Caco-2 (cell line): ENCODE measurements at regions of chr11 and their contacts with region 1.

Region 1: GRCh38 chr11:44621140-44621681 is 55.7 kb downstream of the CD82 start:
- DNase-seq: peak; percentile 78 to 89
- H3K4me3 ChIP-seq: no peak overlapping the region
- H3K4me3 Mint-ChIP-seq: peak overlapping the region; percentile 23
- H3K27ac Mint-ChIP-seq: no peak overlapping the region
- H3K4me1 ChIP-seq: no peaks in the 10 kb centered on the region
- H3K4me1 Mint-ChIP-seq: no peaks in the 10 kb centered on the region
- H3K27me3 ChIP-seq: no peaks in the 10 kb centered on the region; the same call in 1 of the 2 replicates
- H3K27me3 Mint-ChIP-seq: no peaks in the 10 kb centered on the region
- CTCF ChIP-seq: peak; percentile 95 to 97

Region 2: DNA sequence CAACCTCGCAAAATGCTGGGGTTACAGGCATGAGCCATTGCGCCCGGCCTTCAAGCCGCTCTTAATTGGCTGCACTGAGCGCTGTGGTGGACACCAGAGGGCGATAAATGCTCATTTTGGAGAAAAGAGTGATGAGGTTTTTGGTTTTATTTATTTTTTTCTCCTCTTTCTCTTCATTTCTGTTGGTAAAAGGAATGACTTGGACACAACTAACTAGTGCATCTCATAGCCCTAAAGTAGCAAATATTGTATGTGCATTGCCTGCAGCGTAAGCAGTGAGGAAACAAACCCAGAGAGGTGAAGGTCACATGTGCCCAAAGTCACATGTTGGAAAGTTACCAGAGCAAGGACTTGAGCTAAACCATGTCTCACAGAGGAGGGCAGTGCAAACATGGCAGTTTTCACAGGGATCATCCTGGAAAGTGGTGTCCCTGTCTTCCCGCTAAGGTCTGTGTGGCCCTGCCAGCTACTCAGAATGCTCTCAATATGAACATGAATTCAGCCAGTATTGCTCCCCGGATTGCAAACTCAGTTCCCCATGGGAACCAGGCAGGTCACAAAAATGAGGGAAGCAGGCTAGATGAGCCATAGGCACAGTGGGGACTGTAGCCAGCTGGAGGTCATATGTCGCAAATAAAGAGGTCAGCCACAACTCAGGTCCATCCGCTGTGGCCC is 64.3 kb before region 1 on chr11:
- CTCF ChIA-PET with region 1: interaction called, 49 read pairs
- POLR2A ChIA-PET with region 1: no interaction called
- intact Hi-C with region 1: loop called (anchors 1 kb)
- DNase-seq: peak in 1 of 2 experiments; percentile 62
- H3K4me3 ChIP-seq: no peak overlapping the region
- H3K4me3 Mint-ChIP-seq: no peak overlapping the region
- H3K27ac Mint-ChIP-seq: no peak overlapping the region
- H3K4me1 ChIP-seq: no peaks in the 10 kb centered on the region
- H3K4me1 Mint-ChIP-seq: no peaks in the 10 kb centered on the region
- H3K27me3 ChIP-seq: no peaks in the 10 kb centered on the region
- H3K27me3 Mint-ChIP-seq: no peaks in the 10 kb centered on the region
- CTCF ChIP-seq: peak; percentile 53 to 81

Region 3: DNA sequence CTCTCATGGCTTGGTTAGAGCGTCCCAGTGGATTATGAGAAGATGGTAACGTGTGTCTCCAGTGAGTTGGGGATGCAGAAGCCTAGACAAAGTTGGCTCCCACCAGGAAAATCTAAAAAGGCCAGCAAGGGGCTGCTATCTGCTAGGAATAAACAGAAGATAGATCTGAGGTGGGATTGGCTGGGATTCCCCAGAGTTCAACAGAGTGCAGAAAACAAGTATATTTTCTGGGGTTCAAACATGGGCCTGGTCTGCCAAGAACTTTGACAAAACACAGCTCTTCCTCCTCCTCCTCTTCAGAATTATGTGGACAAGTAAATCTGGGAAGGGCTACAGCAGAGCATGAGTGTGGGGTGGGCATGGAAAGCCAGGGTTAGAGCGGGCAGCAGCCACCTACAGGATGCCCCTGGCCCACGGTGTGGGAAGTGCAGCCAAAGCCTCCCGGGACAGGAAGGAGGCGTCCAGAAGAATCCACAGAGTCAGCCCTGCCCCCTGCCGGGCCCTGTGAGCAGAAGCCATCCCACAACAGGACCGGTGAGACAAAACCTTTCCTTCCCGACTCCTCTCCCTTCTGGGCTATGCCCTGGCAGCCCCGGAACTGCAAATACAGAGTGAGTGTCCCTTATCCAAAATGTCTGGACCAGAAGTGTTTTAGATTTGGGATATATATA is 11.4 kb after region 1 on chr11:
- CTCF ChIA-PET with region 1: interaction called, 7 read pairs
- POLR2A ChIA-PET with region 1: no interaction called
- intact Hi-C with region 1: loop called (anchors 1 kb)
- DNase-seq: peak; percentile 47 to 51
- H3K4me3 ChIP-seq: no peak overlapping the region
- H3K4me3 Mint-ChIP-seq: no peak overlapping the region
- H3K27ac Mint-ChIP-seq: no peak overlapping the region
- H3K4me1 ChIP-seq: 0 out of 2 replicates have a peak, but pooled peaks cover 5% of the 10 kb centered on the region
- H3K4me1 Mint-ChIP-seq: no peaks in the 10 kb centered on the region
- H3K27me3 ChIP-seq: no peaks in the 10 kb centered on the region; the same call in none of the 2 replicates
- H3K27me3 Mint-ChIP-seq: peaks cover 27% of the 10 kb centered on the region
- CTCF ChIP-seq: peak; percentile 40 to 56

Region 4: GRCh38 chr11:44709966-44710365 is 88.8 kb after region 1 on chr11:
- CTCF ChIA-PET with region 1: no interaction called
- POLR2A ChIA-PET with region 1: no interaction called
- intact Hi-C with region 1: no loop called
- DNase-seq: no peak
- H3K4me3 ChIP-seq: no peak overlapping the region
- H3K4me3 Mint-ChIP-seq: no peak overlapping the region
- H3K27ac Mint-ChIP-seq: no peak overlapping the region
- H3K4me1 ChIP-seq: peaks cover 24% of the 10 kb centered on the region
- H3K4me1 Mint-ChIP-seq: peaks cover 22% of the 10 kb centered on the region
- H3K27me3 ChIP-seq: no peaks in the 10 kb centered on the region
- H3K27me3 Mint-ChIP-seq: no peaks in the 10 kb centered on the region
- CTCF ChIP-seq: no peak

Region 5: DNA sequence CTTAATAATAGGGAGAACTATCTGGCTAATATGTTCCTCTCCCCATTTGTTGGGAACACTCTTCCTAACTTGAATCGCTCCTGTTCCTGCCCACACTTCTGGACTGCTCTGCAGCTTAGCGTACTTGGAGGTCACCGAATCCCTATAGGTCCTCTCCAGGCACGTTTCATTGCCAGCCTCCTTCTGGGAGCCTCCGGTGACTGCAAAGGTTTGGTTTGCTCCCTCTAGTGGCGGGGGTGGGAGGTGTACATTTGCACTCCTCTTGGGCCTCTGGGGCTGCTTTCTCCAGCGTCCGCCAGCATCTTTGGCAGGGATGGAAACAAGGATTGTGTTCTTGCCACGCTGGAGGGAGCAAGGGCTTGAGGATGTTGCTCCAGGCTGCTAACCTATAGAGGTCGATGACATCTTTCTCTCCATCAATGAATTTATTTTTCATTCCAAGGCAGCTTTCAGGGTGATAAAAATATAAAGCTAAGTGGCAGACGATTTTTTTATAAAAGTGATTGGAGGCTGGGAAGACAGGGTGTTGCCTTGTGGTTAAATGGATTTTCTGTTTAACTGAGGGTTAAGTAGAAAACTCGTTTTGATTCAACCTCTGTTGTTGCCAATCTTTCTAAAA is 154.3 kb after region 1 on chr11:
- CTCF ChIA-PET with region 1: interaction called, 3 read pairs
- POLR2A ChIA-PET with region 1: no interaction called
- intact Hi-C with region 1: loop called (anchors 1 kb)
- DNase-seq: peak; percentile 77 to 82
- H3K4me3 ChIP-seq: no peak overlapping the region
- H3K4me3 Mint-ChIP-seq: no peak overlapping the region
- H3K27ac Mint-ChIP-seq: no peak overlapping the region
- H3K4me1 ChIP-seq: peaks cover 3% of the 10 kb centered on the region; the same call in 1 of the 2 replicates
- H3K4me1 Mint-ChIP-seq: peaks cover 4% of the 10 kb centered on the region
- H3K27me3 ChIP-seq: no peaks in the 10 kb centered on the region; the same call in 1 of the 2 replicates
- H3K27me3 Mint-ChIP-seq: peaks cover 6% of the 10 kb centered on the region
- CTCF ChIP-seq: peak; percentile 85 to 91

Region 6: DNA sequence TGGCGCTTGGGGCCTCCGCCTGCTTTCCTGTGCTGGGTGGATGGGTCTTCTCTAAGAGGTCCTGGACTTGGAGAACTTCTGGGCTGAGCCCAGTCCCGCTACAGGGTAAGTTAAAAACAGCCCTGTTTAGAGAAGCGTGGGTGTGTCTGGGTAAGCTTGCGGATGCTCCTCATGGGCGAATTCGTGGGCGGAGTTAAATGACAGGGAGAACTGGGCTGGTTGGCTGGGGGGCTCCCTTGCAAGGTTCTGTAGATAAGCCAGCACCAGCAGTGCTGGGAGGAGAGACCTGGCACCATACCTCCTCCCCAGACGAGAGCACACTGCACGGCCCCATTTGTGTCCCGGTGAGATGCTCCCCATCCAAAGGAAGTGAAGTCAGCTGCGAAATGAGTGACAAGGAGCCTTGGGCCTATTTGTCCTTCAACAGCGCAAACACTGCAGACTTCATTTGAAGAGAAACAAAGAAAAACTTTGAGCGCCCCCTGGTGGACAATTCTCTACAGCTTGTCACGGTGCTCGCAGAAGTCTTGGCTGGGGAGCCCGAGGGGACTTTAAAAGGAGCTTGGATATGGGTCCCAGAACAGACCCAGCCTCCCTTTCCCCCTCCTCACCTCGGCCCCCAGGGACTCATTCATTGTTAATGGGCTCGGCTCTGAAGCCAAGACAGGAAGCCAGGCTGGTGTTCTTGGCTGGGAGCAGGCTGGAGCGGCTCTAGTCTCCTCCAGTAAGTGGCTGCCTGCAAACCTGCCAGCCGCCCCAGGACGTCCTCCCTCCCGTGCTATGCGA is 290.0 kb after region 1 on chr11:
- CTCF ChIA-PET with region 1: interaction called, 16 read pairs
- POLR2A ChIA-PET with region 1: no interaction called
- intact Hi-C with region 1: loop called (anchors 1 kb)
- DNase-seq: peak; percentile 81 to 86
- H3K4me3 ChIP-seq: no peak overlapping the region
- H3K4me3 Mint-ChIP-seq: no peak overlapping the region
- H3K27ac Mint-ChIP-seq: no peak overlapping the region
- H3K4me1 ChIP-seq: peaks cover 9% of the 10 kb centered on the region
- H3K4me1 Mint-ChIP-seq: peaks cover 7% of the 10 kb centered on the region
- H3K27me3 ChIP-seq: no peaks in the 10 kb centered on the region
- H3K27me3 Mint-ChIP-seq: no peaks in the 10 kb centered on the region
- CTCF ChIP-seq: peak; percentile 82 to 86